Activated CD4-positive, alpha-beta T cell treated with anti-CD3 and anti-CD28 coated beads, Interleukin-2, amount 10 ng/mL, durations not matched to agents 24 days and 14 days (primary cell): ENCODE measurements at regions of chr11 and their contacts with region 1.

Region 1: DNA sequence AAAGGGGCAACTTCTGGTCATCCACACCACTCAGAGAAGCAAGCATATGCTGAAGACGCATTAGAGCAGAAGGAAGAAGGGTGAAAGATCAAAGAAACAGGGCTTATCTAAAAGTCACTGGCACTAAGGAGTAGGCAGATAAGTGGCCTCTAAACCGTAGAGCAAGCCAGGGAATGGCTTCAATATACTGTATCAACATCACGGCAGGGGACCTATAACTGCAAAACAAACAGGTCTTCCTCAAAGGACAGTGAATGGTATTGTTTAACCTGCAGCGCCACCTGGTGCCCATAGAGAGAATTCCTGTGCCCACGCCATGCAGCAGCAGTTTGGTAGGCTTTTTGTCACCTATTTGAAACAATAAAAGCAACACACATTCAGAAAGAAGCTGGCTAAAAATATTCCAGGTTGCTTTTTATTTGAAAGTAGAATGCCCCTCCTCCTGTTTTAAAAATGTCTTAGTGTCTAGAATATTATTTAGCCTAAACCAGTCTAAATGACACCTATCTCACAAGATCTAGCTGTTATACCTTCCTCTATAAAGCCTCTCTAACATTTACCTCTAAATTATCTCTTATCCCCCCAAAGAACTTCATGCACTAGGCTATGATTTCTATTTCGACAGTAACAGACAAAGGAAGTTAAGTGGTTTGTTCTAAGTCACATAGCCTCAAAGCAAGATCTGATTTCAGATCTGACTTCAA is 21.8 kb downstream of the SNX19 start:
- DNase-seq: peak; percentile 88
- H3K4me3 Mint-ChIP-seq: no peak overlapping the region
- H3K27ac Mint-ChIP-seq: no peak overlapping the region
- H3K4me1 Mint-ChIP-seq: no peaks in the 10 kb centered on the region
- H3K27me3 Mint-ChIP-seq: no peaks in the 10 kb centered on the region

Region 2: GRCh38 chr11:130861902-130862860 is 32.3 kb before region 1 on chr11:
- intact Hi-C with region 1: loop called (anchors 1 kb)
- DNase-seq: peak; percentile 96
- H3K4me3 Mint-ChIP-seq: no peak overlapping the region
- H3K27ac Mint-ChIP-seq: no peak overlapping the region
- H3K4me1 Mint-ChIP-seq: no peaks in the 10 kb centered on the region
- H3K27me3 Mint-ChIP-seq: peaks cover under 1% of the 10 kb centered on the region